ENCODE measurements at regions of chr13 and their contacts with region 1.

Region 1: DNA sequence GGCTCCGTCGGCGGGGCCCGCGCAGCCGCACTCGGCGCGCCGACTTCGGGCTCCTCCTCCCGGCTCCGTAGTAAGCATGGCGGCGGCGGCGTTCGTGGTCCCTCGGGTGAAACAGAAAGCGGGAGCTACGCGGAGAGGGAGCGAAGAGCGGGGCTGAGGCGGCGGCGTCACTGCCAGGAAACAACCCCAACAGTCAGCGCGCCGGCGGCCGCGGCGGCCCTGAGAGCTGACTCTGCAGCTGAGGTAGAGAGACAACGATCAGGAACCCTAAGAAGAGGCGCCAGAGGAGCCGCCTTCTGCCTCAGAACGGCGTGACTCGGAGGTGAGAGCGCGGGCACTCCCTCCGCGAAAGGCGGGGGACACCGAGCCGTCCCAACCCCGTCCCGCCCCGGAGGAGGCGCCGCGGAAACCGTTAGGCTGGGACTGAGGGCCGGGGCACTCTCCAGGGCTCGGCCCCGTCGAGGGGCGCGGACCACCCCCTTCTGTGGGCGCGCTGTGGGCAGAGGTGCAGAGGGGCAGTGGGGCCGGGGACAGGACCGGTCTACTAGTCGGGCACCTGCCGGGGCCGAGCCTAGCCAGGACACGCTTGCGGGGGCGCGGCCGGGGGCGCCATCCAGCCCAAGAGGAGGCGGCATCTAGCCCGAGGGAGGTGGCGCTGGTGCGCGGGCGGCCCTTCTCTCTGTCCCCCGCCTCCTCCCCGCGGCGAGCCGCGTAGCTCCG is at the start of gene FNDC3A:
- DNase-seq: peak; percentile 82
- H3K4me3 ChIP-seq: peak within 1 kb of the TSS; percentile 60 to 93 (median 86)
- H3K27ac ChIP-seq: peak within 1 kb of the TSS; percentile 87
- H3K4me1 ChIP-seq: peaks cover 19% of the 10 kb centered on the region
- H3K27me3 ChIP-seq: no peaks in the 10 kb centered on the region
- CTCF ChIP-seq: peak in 1 of 2 donors; percentile 16
- POLR2A ChIP-seq: peak; percentile 23
- total RNA-seq, gene FNDC3A: 50.8 and 51.2 TPM in 2 replicates

Region 2: GRCh38 chr13:48653472-48653939 is 322.5 kb before region 1 on chr13 and contains the start of gene CYSLTR2:
- CTCF ChIA-PET with region 1: no interaction called
- POLR2A ChIA-PET with region 1: no interaction called
- dilution Hi-C with region 1: no loop called
- intact Hi-C with region 1: no loop called
- DNase-seq: peak; percentile 50
- H3K4me3 ChIP-seq: no peak within 1 kb of the TSS
- H3K27ac ChIP-seq: no peak within 1 kb of the TSS
- H3K4me1 ChIP-seq: no peaks in the 10 kb centered on the region
- H3K27me3 ChIP-seq: peaks cover 7 to 18% of the 10 kb centered on the region in 2 experiments
- CTCF ChIP-seq: no peak
- POLR2A ChIP-seq: no peak
- total RNA-seq, gene CYSLTR2: 0.16 and 0.31 TPM in 2 replicates

Region 3: DNA sequence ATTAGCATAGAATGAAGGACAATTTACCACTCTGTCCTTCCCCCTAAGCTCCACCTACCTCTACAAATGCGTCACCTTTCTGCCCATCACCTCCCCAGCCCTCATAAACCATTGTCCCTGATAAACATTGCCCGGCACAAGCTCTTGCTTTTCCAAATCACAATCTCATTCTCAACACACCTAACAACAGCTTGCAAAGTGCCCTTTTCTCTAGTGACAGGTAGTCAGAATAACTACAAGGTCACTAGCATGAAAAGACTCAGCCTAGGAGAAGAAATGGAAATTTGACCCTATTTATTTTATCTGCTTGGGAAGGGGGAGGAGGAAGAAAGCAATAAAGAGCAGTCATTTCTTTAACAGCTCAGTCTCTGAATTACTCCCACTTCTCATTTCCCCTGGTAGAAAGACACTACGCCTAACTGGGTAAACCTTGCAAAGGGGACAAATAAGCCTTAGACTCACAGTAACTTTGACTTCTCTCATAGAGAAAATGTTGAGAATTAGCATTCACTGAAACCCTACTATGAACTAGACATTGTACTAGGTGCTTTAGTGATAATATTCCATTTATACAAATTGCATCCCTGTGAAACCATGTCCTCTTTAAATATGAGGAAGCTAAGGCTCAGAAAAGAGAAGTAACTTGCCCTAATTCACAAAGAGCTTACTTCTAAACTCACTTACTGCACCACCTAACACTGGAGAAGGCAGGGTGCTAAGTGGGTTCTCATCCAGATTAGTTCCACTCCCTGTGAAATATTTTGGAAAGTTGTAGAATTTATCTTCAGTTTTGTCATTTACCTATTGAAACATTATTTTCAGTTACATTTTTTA is 116.5 kb before region 1 on chr13:
- CTCF ChIA-PET with region 1: no interaction called
- POLR2A ChIA-PET with region 1: no interaction called
- dilution Hi-C with region 1: no loop called
- intact Hi-C with region 1: no loop called
- DNase-seq: no peak
- H3K4me3 ChIP-seq: no peak overlapping the region
- H3K27ac ChIP-seq: no peak overlapping the region
- H3K4me1 ChIP-seq: no peaks in the 10 kb centered on the region
- H3K27me3 ChIP-seq: no peaks in the 10 kb centered on the region
- CTCF ChIP-seq: no peak
- POLR2A ChIP-seq: no peak

Region 4: GRCh38 chr13:48892053-48892690 is 83.8 kb before region 1 on chr13:
- CTCF ChIA-PET with region 1: interaction called, 4 read pairs
- POLR2A ChIA-PET with region 1: no interaction called
- dilution Hi-C with region 1: no loop called
- intact Hi-C with region 1: loop called (anchors 1 kb)
- DNase-seq: peak; percentile 91
- H3K4me3 ChIP-seq: no peak overlapping the region
- H3K27ac ChIP-seq: peak overlapping the region; percentile 74
- H3K4me1 ChIP-seq: peaks cover 27% of the 10 kb centered on the region
- H3K27me3 ChIP-seq: no peaks in the 10 kb centered on the region
- CTCF ChIP-seq: no peak
- POLR2A ChIP-seq: no peak

Region 5: DNA sequence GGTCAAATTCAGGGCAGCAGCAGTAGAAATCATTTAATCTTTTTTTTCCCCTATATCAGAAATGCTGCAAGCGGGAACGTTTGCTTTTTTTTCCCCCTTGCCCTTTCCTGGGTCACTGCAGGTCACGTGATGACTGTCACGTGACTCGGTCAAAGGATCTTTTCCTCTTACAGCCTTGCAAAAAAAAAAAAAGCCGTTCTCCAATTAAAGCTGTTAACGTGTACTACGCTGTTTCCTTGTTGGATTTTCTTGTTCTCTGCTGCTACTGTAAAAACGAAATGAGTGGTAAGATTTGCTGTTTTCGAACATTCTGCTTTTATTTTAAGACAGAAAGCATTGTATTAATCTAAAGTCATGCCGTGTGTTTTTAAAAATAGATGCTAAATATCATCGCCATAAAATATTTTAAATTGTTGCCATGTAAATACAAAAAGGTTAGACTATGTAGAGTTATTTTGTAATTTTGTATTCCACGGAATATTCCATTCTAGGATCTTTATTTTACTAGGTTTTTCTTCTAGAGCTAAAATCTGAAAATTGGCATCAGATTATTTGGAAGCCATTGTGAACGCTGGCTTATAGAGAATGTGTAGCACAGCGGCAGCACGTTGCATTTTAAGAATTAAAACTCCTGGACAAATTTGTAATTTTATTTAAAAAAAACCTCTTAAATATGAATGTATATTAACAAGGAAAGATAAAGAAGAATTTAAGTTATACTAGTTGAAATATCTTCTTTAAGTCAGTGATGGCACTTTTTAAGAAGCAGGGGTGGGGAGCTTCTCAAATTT is 134.3 kb after region 1 on chr13:
- CTCF ChIA-PET with region 1: no interaction called
- POLR2A ChIA-PET with region 1: no interaction called
- dilution Hi-C with region 1: no loop called
- intact Hi-C with region 1: loop called (anchors 5 kb)
- DNase-seq: peak; percentile 87
- H3K4me3 ChIP-seq: peak overlapping the region; percentile 35 to 100 (median 100)
- H3K27ac ChIP-seq: peak overlapping the region; percentile 96
- H3K4me1 ChIP-seq: peaks cover 30% of the 10 kb centered on the region
- H3K27me3 ChIP-seq: no peaks in the 10 kb centered on the region
- CTCF ChIP-seq: no peak
- POLR2A ChIP-seq: peak; percentile 66

Region 6: GRCh38 chr13:49165798-49166752 is 190.1 kb after region 1 on chr13:
- CTCF ChIA-PET with region 1: no interaction called
- POLR2A ChIA-PET with region 1: no interaction called
- dilution Hi-C with region 1: no loop called
- intact Hi-C with region 1: no loop called
- DNase-seq: no peak
- H3K4me3 ChIP-seq: no peak overlapping the region
- H3K27ac ChIP-seq: no peak overlapping the region
- H3K4me1 ChIP-seq: no peaks in the 10 kb centered on the region
- H3K27me3 ChIP-seq: no peaks in the 10 kb centered on the region
- CTCF ChIP-seq: no peak
- POLR2A ChIP-seq: no peak

Region 7: DNA sequence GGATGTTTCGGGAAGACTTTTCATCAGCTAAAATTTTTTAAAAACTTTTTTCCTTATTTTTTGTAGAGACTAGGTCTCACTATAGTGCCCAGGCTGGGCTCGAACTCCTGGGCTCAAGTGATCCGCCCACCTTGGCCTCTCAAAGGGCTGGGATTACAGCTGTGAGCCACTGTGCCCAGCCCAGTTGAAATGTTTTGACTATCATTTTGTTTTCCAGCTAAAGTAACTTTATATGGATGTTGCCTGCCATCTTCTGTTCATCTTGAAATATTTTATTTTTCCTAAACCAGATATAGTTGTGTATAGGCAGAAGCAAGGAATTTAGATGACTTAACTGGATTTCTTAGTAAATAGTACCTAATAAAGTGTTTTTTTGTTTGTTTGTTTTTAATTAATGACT is 460.9 kb after region 1 on chr13:
- CTCF ChIA-PET with region 1: no interaction called
- POLR2A ChIA-PET with region 1: no interaction called
- dilution Hi-C with region 1: no loop called
- intact Hi-C with region 1: no loop called
- DNase-seq: no peak
- H3K4me3 ChIP-seq: no peak overlapping the region
- H3K27ac ChIP-seq: no peak overlapping the region
- H3K4me1 ChIP-seq: peaks cover 4% of the 10 kb centered on the region
- H3K27me3 ChIP-seq: no peaks in the 10 kb centered on the region
- CTCF ChIP-seq: no peak
- POLR2A ChIP-seq: no peak

Region 8: GRCh38 chr13:49585220-49586157 is 609.5 kb after region 1 on chr13 and contains the start of gene RCBTB1:
- CTCF ChIA-PET with region 1: no interaction called
- POLR2A ChIA-PET with region 1: no interaction called
- dilution Hi-C with region 1: no loop called
- intact Hi-C with region 1: loop called (anchors 5 kb)
- DNase-seq: peak; percentile 69
- H3K4me3 ChIP-seq: peak within 1 kb of the TSS; percentile 85 to 94 (median 89)
- H3K27ac ChIP-seq: peak within 1 kb of the TSS; percentile 64
- H3K4me1 ChIP-seq: peaks cover 16% of the 10 kb centered on the region
- H3K27me3 ChIP-seq: no peaks in the 10 kb centered on the region
- CTCF ChIP-seq: no peak
- POLR2A ChIP-seq: peak; percentile 69
- total RNA-seq, gene RCBTB1: 23.6 and 23.8 TPM in 2 replicates

Measured in endothelial cell of umbilical vein (primary cell).